Upper lobe of right lung (tissue), 1 donor: ENCODE measurements at regions of chr2 and their contacts with region 1.

Region 1: GRCh38 chr2:11129598-11130449 is 25.4 kb upstream of the SLC66A3 start:
- DNase-seq: peak; percentile 90
- ATAC-seq: peak; percentile 84
- H3K4me3 ChIP-seq: peak overlapping the region; percentile 46
- H3K27ac ChIP-seq: peak overlapping the region; percentile 68
- H3K4me1 ChIP-seq: peaks cover 24% of the 10 kb centered on the region
- H3K27me3 ChIP-seq: no peaks in the 10 kb centered on the region
- CTCF ChIP-seq: peak; percentile 39

Region 2: GRCh38 chr2:11177871-11178690 is 48.3 kb after region 1 on chr2:
- intact Hi-C with region 1: no loop called
- DNase-seq: no peak
- ATAC-seq: no peak
- H3K4me3 ChIP-seq: no peak overlapping the region
- H3K27ac ChIP-seq: no peak overlapping the region
- H3K4me1 ChIP-seq: no peaks in the 10 kb centered on the region
- H3K27me3 ChIP-seq: no peaks in the 10 kb centered on the region
- CTCF ChIP-seq: no peak

Region 3: GRCh38 chr2:11196246-11196645 is 66.4 kb after region 1 on chr2:
- intact Hi-C with region 1: loop called (anchors 10 kb)
- DNase-seq: no peak
- ATAC-seq: no peak
- H3K4me3 ChIP-seq: no peak overlapping the region
- H3K27ac ChIP-seq: no peak overlapping the region
- H3K4me1 ChIP-seq: no peaks in the 10 kb centered on the region
- H3K27me3 ChIP-seq: no peaks in the 10 kb centered on the region
- CTCF ChIP-seq: no peak